ENCODE measurements at regions of chr6 and their contacts with region 1.

Region 1: DNA sequence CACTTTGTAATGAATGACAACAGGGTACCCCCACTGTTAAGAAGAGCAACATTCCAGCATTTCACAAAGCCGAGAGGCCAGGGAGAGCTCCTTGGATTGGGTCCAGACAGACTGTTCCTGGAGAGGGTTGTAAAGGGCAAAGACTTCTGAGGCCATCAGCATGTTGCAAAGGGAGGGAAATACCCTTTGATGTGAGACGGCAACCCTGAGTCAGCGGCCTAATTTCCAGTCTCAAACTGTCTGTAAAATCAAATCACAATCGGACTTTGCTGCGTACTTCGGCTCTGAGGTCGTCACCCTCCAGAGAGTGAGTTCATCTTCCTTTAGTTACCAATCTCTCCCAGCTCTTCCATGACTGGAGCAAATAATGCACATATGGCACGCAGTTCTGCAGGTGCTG is 101.0 kb upstream of the DTNBP1 start:
- DNase-seq: peak; percentile 22
- ATAC-seq: no peak
- H3K4me3 ChIP-seq: no peak overlapping the region
- H3K27ac ChIP-seq: no peak overlapping the region
- H3K4me1 ChIP-seq: peaks cover 5% of the 10 kb centered on the region; the same call in 1 of the 2 replicates
- H3K27me3 ChIP-seq: peaks cover 4% of the 10 kb centered on the region
- CTCF ChIP-seq: no peak
- POLR2A ChIP-seq: no peak
- RAD21 ChIP-seq: no peak

Region 2: GRCh38 chr6:15730442-15730841 is 33.4 kb before region 1 on chr6:
- CTCF ChIA-PET with region 1: no interaction called
- POLR2A ChIA-PET with region 1: no interaction called
- dilution Hi-C with region 1: no loop called
- in situ Hi-C with region 1: no loop called
- intact Hi-C with region 1: no loop called
- DNase-seq: no peak
- ATAC-seq: no peak
- H3K4me3 ChIP-seq: no peak overlapping the region
- H3K27ac ChIP-seq: no peak overlapping the region
- H3K4me1 ChIP-seq: no peaks in the 10 kb centered on the region
- H3K27me3 ChIP-seq: peaks cover 19% of the 10 kb centered on the region
- CTCF ChIP-seq: no peak
- POLR2A ChIP-seq: no peak
- RAD21 ChIP-seq: no peak

Region 3: DNA sequence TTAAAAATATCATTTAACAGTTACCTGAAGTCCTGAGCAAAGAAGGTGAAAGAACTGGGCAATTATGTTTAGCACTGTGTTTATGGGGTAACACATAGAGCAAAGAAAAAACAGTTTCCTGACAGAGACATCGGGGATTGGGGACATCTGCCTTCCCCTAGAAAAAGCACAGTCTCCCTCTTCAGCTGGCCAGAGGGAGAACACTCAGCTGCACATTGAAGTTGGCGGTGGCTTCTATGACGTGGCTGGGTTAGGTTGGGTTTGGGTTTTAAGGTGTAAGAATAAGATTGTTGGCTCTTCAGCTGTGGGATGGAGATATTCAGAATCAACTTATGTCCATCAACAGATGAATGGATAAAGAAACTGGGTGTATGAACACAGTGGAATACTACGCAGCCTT is 23.0 kb after region 1 on chr6:
- CTCF ChIA-PET with region 1: interaction called, 10 read pairs
- POLR2A ChIA-PET with region 1: no interaction called
- dilution Hi-C with region 1: no loop called
- in situ Hi-C with region 1: no loop called
- intact Hi-C with region 1: no loop called
- DNase-seq: no peak
- ATAC-seq: no peak
- H3K4me3 ChIP-seq: no peak overlapping the region
- H3K27ac ChIP-seq: no peak overlapping the region
- H3K4me1 ChIP-seq: no peaks in the 10 kb centered on the region
- H3K27me3 ChIP-seq: peaks cover 16% of the 10 kb centered on the region
- CTCF ChIP-seq: no peak
- POLR2A ChIP-seq: no peak
- RAD21 ChIP-seq: no peak

Region 4: DNA sequence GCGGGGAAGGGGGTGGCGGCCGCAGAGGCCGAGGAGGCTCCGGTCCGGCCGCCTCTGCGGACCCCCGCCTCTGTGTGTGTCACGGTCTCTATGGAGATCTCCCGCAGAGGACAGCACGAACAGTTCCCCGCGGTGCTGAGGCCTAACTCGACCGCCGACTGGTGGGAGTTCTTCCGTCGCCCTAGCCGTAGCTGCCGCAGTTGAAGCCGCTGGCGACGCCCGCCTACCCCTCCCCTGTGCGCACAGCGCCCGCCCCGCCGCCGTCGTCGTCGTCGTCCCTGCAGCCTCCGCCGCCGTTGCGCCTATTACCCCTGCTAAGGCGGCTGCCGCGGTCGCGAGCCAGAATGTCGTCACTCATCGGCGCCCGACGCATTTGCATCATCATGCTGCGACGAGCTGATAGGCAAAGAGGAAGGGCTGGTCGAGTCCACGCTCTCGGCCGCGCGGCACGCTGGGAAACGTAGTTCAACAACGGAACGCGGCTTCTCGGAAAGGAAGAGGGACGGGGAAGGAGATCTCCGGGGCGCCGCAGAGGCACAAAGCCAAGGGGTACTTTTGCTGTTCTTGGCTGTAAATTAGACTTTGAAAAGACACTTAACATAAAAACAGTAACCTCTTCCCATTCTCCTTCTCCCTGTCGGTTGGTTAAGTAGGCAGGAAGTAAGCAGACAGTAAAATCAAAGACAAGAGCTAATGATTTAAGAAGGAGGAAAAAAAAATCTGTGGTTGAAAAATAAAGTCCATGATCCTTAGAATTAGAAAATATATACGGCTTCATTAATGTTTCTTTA is 1942.9 kb after region 1 on chr6 and contains the start of gene NUP153:
- CTCF ChIA-PET with region 1: no interaction called
- POLR2A ChIA-PET with region 1: no interaction called
- dilution Hi-C with region 1: no loop called
- in situ Hi-C with region 1: no loop called
- intact Hi-C with region 1: no loop called
- DNase-seq: peak; percentile 98
- ATAC-seq: peak; percentile 73
- H3K4me3 ChIP-seq: peak within 1 kb of the TSS; percentile 61
- H3K27ac ChIP-seq: peak within 1 kb of the TSS; percentile 76
- H3K4me1 ChIP-seq: peaks cover 5% of the 10 kb centered on the region
- H3K27me3 ChIP-seq: no peaks in the 10 kb centered on the region
- CTCF ChIP-seq: no peak
- POLR2A ChIP-seq: peak; percentile 89
- RAD21 ChIP-seq: no peak
- total RNA-seq, gene NUP153: 37.5 and 39.4 TPM in 2 replicates